MCF 10A (cell line): ENCODE measurements at regions of chrX and their contacts with region 1.

Region 1: GRCh38 chrX:53340852-53341607 is 59.6 kb upstream of the IQSEC2 start:
- DNase-seq: no peak
- H3K4me3 Mint-ChIP-seq: no peak overlapping the region
- H3K27ac Mint-ChIP-seq: no peak overlapping the region
- H3K4me1 Mint-ChIP-seq: no peaks in the 10 kb centered on the region
- H3K27me3 Mint-ChIP-seq: peaks cover 21% of the 10 kb centered on the region
- CTCF ChIP-seq: no peak

Region 2: DNA sequence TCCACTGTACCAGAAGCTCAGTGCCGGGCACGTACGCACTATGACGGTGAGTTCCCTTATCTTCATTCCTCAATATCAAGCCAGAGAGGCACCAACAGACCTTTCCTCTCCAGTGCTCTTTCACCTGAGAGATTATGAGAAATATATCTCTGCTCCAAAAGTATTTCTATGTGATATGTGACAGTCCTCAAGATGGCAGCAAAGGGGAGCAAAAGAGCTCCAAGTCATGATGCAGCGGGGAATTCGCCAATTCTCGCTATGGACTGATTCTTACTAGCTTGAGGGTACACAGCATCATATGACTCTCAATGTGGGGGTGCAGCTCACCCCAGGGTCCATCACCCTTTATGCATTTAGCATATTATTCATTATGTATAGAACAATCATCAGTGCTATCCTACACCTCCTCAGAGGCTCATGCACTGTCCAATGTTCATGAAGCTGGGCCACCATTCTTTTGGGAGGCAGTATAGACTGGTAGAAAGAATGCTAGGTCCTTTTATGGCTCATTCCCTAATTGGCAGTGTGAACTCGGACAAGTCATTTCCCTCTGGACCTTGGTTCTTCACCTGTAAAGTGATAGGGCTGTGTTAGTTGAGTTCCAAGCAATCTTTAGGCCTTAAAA is 46.9 kb before region 1 on chrX:
- CTCF ChIA-PET with region 1: no interaction called
- POLR2A ChIA-PET with region 1: no interaction called
- intact Hi-C with region 1: no loop called
- DNase-seq: no peak
- H3K4me3 Mint-ChIP-seq: no peak overlapping the region
- H3K27ac Mint-ChIP-seq: no peak overlapping the region
- H3K4me1 Mint-ChIP-seq: no peaks in the 10 kb centered on the region
- H3K27me3 Mint-ChIP-seq: peaks cover 62% of the 10 kb centered on the region
- CTCF ChIP-seq: peak; percentile 35

Region 3: GRCh38 chrX:53330331-53330730 is 10.7 kb before region 1 on chrX:
- CTCF ChIA-PET with region 1: interaction called, 13 read pairs
- POLR2A ChIA-PET with region 1: no interaction called
- intact Hi-C with region 1: no loop called
- DNase-seq: no peak
- H3K4me3 Mint-ChIP-seq: no peak overlapping the region
- H3K27ac Mint-ChIP-seq: no peak overlapping the region
- H3K4me1 Mint-ChIP-seq: no peaks in the 10 kb centered on the region
- H3K27me3 Mint-ChIP-seq: peaks cover 98% of the 10 kb centered on the region
- CTCF ChIP-seq: no peak